IMR-90 (cell line): ENCODE measurements at regions of chr7 and their contacts with region 1.

Region 1: GRCh38 chr7:141511676-141512396 is 39.4 kb upstream of the AGK start:
- DNase-seq: no peak
- ATAC-seq: no peak
- H3K4me3 ChIP-seq: no peak overlapping the region
- H3K27ac ChIP-seq: no peak overlapping the region
- H3K4me1 ChIP-seq: no peaks in the 10 kb centered on the region
- H3K27me3 ChIP-seq: peaks cover 15% of the 10 kb centered on the region
- CTCF ChIP-seq: no peak
- POLR2A ChIP-seq: no peak
- RAD21 ChIP-seq: no peak

Region 2: DNA sequence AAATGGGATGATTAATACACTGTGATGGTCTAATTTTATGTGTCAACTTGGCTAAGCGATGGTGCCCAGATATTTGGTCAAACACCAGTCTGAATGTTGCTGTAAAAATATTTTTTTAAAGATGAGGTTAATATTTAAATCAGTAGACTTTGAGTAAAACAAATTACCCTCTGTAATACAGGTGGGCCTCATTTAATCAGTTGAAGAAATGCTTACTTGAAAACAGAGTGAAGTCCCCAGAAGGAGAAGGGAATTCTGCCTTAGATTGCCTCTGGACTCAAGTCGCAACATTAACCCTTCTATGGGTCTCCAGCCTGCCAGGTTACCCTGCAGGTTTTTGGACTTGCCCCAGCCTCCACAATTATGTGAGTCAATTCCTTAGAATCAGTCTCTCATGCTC is 10.4 kb before region 1 on chr7:
- CTCF ChIA-PET with region 1: no interaction called
- POLR2A ChIA-PET with region 1: interaction called, 11 read pairs
- dilution Hi-C with region 1: no loop called
- in situ Hi-C with region 1: no loop called
- intact Hi-C with region 1: no loop called
- DNase-seq: no peak
- ATAC-seq: no peak
- H3K4me3 ChIP-seq: no peak overlapping the region
- H3K27ac ChIP-seq: no peak overlapping the region
- H3K4me1 ChIP-seq: no peaks in the 10 kb centered on the region
- H3K27me3 ChIP-seq: no peaks in the 10 kb centered on the region; the same call in 1 of the 2 replicates
- CTCF ChIP-seq: no peak
- POLR2A ChIP-seq: no peak
- RAD21 ChIP-seq: no peak

Region 3: GRCh38 chr7:141722529-141722928 is 210.7 kb after region 1 on chr7:
- CTCF ChIA-PET with region 1: no interaction called
- POLR2A ChIA-PET with region 1: no interaction called
- dilution Hi-C with region 1: no loop called
- in situ Hi-C with region 1: no loop called
- intact Hi-C with region 1: no loop called
- DNase-seq: no peak
- ATAC-seq: no peak
- H3K4me3 ChIP-seq: no peak overlapping the region
- H3K27ac ChIP-seq: no peak overlapping the region
- H3K4me1 ChIP-seq: no peaks in the 10 kb centered on the region
- H3K27me3 ChIP-seq: no peaks in the 10 kb centered on the region
- CTCF ChIP-seq: no peak
- POLR2A ChIP-seq: no peak
- RAD21 ChIP-seq: no peak